Naive thymus-derived CD8-positive, alpha-beta T cell (primary cell): ENCODE measurements at regions of chr22 and their contacts with region 1.

Region 1: GRCh38 chr22:39938509-39939111 is 21.6 kb upstream of the TMA7B start:
- DNase-seq: peak in 3 of 10 donors; percentile 24 to 48 (median 41)
- ATAC-seq: peak; percentile 5 to 15
- H3K4me3 Mint-ChIP-seq: peak overlapping the region in 9 of 10 donors; percentile 68 to 94 (median 88)
- H3K27ac Mint-ChIP-seq: peak overlapping the region in 6 of 10 donors; percentile 95 to 99 (median 98)
- H3K4me1 Mint-ChIP-seq: peaks cover 47 to 97% (median 94%) of the 10 kb centered on the region in 4 donors
- H3K27me3 Mint-ChIP-seq: no peaks in the 10 kb centered on the region

Region 2: GRCh38 chr22:39927544-39927943 is 11.1 kb before region 1 on chr22:
- POLR2A ChIA-PET with region 1: interaction called, 109 read pairs
- DNase-seq: no peak
- ATAC-seq: no peak
- H3K4me3 Mint-ChIP-seq: no peak overlapping the region
- H3K27ac Mint-ChIP-seq: no peak overlapping the region
- H3K4me1 Mint-ChIP-seq: peaks cover 31 to 54% (median 40%) of the 10 kb centered on the region in 4 donors
- H3K27me3 Mint-ChIP-seq: no peaks in the 10 kb centered on the region